ENCODE measurements at regions of chr5 and their contacts with region 1.

Region 1: DNA sequence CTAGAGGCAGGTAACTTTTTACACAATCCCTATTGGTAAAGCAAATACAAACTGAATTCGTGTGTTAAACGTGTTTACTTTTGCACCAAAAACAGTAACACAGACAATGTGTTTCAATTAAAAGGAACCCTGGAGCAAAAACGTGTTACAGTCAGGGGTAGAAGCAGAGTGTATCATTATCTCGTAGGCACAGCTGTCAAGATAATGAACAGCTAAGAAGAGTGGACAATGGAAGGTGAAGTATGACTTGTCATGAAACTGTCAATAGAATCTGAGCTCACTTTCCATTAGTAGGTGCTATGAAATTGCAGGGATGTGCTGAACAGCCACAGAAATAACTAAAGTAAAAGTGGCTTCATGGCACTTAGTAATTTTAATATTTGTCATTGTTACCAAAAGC is 1229.8 kb upstream of the WWC1 start:
- DNase-seq: no peak
- H3K4me3 ChIP-seq: no peak overlapping the region
- H3K27ac ChIP-seq: no peak overlapping the region
- H3K4me1 ChIP-seq: no peaks in the 10 kb centered on the region
- H3K27me3 ChIP-seq: peaks cover 5% of the 10 kb centered on the region; the same call in 1 of the 2 replicates
- CTCF ChIP-seq: no peak

Region 2: DNA sequence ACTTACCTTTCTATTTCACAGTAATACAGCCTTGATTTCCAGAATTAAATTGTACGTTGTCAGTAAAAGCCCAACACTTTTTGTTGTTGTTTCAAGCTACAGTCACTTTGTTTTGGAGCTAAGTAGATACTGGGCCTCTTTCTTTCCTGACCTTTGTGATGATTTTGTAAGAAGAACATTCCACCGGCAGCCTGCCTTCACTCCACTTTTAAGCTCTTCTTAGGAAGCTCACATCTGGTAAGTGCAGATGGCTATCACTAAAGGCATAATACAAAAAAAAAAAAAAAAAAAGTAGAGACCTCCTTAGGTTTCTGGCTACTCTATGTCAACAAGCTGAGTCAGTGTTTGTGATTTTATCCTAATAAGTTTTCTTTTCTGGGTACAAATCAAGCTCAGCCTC is 692.4 kb before region 1 on chr5:
- CTCF ChIA-PET with region 1: no interaction called
- POLR2A ChIA-PET with region 1: interaction called, 25 read pairs
- intact Hi-C with region 1: no loop called
- DNase-seq: no peak
- H3K4me3 ChIP-seq: no peak overlapping the region
- H3K27ac ChIP-seq: no peak overlapping the region
- H3K4me1 ChIP-seq: no peaks in the 10 kb centered on the region
- H3K27me3 ChIP-seq: no peaks in the 10 kb centered on the region
- CTCF ChIP-seq: no peak

Region 3: GRCh38 chr5:167147879-167148278 is 86.2 kb after region 1 on chr5:
- CTCF ChIA-PET with region 1: no interaction called
- POLR2A ChIA-PET with region 1: no interaction called
- intact Hi-C with region 1: no loop called
- DNase-seq: no peak
- H3K4me3 ChIP-seq: no peak overlapping the region
- H3K27ac ChIP-seq: no peak overlapping the region
- H3K4me1 ChIP-seq: no peaks in the 10 kb centered on the region
- H3K27me3 ChIP-seq: peaks cover 41% of the 10 kb centered on the region
- CTCF ChIP-seq: no peak

Measured in PC-9 (cell line).